ENCODE measurements at regions of chr1 and their contacts with region 1.

Region 1: DNA sequence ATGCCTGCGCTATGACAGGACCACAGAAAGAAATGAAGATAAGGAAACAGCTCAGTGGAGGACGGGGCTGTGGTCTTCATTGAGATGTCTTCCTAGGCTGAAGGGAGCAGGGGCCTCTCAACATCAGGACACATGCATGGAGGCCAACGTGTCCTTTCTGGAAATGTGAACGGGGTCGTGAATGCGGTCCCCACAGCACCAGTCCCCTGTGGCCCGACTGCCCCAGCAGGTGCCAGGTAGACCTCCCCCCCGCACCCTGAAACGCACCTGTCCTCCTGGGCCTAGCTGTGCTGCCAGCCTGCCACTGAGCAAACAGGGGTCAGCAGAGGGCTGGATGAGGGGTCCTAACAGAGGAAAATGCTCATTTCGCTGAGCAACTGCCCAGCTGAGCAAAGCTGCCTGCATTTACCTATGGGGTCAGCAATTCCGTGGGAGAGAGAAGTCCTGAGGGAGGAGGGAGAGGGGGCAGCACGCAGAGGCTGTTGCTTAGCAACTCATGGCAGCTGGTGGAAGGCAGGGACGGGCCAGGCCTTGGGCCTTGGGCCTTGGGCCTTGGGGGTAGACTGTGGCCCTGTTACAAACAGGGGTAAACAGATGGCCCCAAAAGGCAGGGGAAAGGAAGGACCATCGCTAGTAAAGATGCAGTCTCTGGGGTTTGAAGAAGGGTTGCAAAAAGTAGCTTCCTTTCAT is 77.4 kb downstream of the NPHP4 start:
- DNase-seq: no peak
- ATAC-seq: no peak
- H3K4me3 ChIP-seq: no peak overlapping the region
- H3K4me3 Mint-ChIP-seq: no peak overlapping the region
- H3K27ac ChIP-seq: no peak overlapping the region
- H3K27ac Mint-ChIP-seq: no peak overlapping the region
- H3K4me1 ChIP-seq: peaks cover 0 to 4% of the 10 kb centered on the region in 2 experiments
- H3K4me1 Mint-ChIP-seq: peaks cover 5 to 7% (median 6%) of the 10 kb centered on the region in 3 donors
- H3K27me3 ChIP-seq: no peaks in the 10 kb centered on the region
- H3K27me3 Mint-ChIP-seq: no peaks in the 10 kb centered on the region

Region 2: GRCh38 chr1:3942416-3942815 is 1972.4 kb before region 1 on chr1:
- CTCF ChIA-PET with region 1: no interaction called
- POLR2A ChIA-PET with region 1: interaction called in 1 of 2 experiments, 12 read pairs
- DNase-seq: no peak
- ATAC-seq: no peak
- H3K4me3 ChIP-seq: no peak overlapping the region
- H3K4me3 Mint-ChIP-seq: no peak overlapping the region
- H3K27ac ChIP-seq: no peak overlapping the region
- H3K27ac Mint-ChIP-seq: no peak overlapping the region
- H3K4me1 ChIP-seq: no peaks in the 10 kb centered on the region
- H3K4me1 Mint-ChIP-seq: no peaks in the 10 kb centered on the region
- H3K27me3 ChIP-seq: peaks cover 0 to 42% of the 10 kb centered on the region in 2 experiments
- H3K27me3 Mint-ChIP-seq: peaks cover 20 to 40% of the 10 kb centered on the region in 2 donors

Region 3: DNA sequence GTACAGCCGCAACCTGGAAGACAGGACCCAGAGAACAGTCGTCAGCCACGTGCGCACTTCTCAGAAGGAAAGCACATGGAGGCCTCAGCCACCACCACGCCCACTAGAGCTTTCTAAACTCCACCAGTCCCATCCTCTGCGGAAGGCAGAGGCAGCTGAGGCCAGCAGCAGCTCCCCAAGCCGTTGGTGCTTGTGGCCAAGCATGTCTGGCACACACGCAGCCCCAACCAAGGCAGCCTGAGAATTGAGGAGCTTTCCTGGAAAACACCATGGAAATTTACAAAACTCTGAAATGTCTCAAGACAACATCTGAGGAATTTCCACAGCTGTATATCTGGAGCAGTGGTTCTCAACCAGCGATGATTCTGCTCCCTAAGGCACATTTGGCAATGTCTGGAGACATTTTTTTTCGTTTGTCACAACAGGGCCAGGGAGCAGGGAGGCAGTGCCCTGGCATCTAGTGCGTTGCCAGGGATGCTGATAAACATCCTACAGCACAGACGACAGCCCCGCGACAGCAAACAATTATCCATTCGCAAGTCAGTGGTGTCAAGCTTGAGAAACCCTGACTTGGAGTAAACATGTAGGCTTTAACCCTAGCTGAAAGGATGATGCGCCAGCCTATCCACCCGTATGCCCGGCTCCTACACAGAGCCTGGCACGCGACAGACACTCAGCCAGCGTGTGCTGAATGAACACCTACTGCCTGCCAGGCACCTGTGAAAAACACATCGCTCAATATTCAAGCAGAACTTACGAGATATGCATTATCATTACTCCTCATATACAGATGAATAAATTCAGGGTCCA is 52.7 kb after region 1 on chr1:
- CTCF ChIA-PET with region 1: no interaction called
- POLR2A ChIA-PET with region 1: no interaction called
- DNase-seq: no peak
- ATAC-seq: no peak
- H3K4me3 ChIP-seq: no peak overlapping the region
- H3K4me3 Mint-ChIP-seq: no peak overlapping the region
- H3K27ac ChIP-seq: no peak overlapping the region
- H3K27ac Mint-ChIP-seq: no peak overlapping the region
- H3K4me1 ChIP-seq: no peaks in the 10 kb centered on the region
- H3K4me1 Mint-ChIP-seq: no peaks in the 10 kb centered on the region
- H3K27me3 ChIP-seq: no peaks in the 10 kb centered on the region
- H3K27me3 Mint-ChIP-seq: no peaks in the 10 kb centered on the region

Measured in T-cell (primary cell).